Activated T-helper 2 cell treated with anti-CD3 and anti-CD28 coated beads, Interferon-gamma antibody, Interleukin-2, Interleukin-4, amounts not matched to agents 10 μg/mL and 5 μg/mL and 100 μg/mL, durations not matched to agents 14 hours and 24 hours and 36 hours (primary cell): ENCODE measurements at regions of chr3 and their contacts with region 1.

Region 1: GRCh38 chr3:45188719-45189659 is 37.1 kb downstream of the TMEM158 start:
- DNase-seq: no peak
- H3K4me3 Mint-ChIP-seq: no peak overlapping the region
- H3K27ac Mint-ChIP-seq: no peak overlapping the region
- H3K4me1 Mint-ChIP-seq: peaks cover 46% of the 10 kb centered on the region
- H3K27me3 Mint-ChIP-seq: peaks cover 2% of the 10 kb centered on the region

Region 2: GRCh38 chr3:44942202-44942921 is 246.6 kb before region 1 on chr3:
- intact Hi-C with region 1: no loop called
- DNase-seq: no peak
- H3K4me3 Mint-ChIP-seq: no peak overlapping the region
- H3K27ac Mint-ChIP-seq: no peak overlapping the region
- H3K4me1 Mint-ChIP-seq: peaks cover 3% of the 10 kb centered on the region
- H3K27me3 Mint-ChIP-seq: no peaks in the 10 kb centered on the region

Region 3: GRCh38 chr3:45064512-45065372 is 124.2 kb before region 1 on chr3:
- intact Hi-C with region 1: loop called (anchors 5 kb)
- DNase-seq: peak; percentile 69
- H3K4me3 Mint-ChIP-seq: peak overlapping the region; percentile 69
- H3K27ac Mint-ChIP-seq: peak overlapping the region; percentile 96
- H3K4me1 Mint-ChIP-seq: peaks cover 50% of the 10 kb centered on the region
- H3K27me3 Mint-ChIP-seq: peaks cover 3% of the 10 kb centered on the region

Region 4: DNA sequence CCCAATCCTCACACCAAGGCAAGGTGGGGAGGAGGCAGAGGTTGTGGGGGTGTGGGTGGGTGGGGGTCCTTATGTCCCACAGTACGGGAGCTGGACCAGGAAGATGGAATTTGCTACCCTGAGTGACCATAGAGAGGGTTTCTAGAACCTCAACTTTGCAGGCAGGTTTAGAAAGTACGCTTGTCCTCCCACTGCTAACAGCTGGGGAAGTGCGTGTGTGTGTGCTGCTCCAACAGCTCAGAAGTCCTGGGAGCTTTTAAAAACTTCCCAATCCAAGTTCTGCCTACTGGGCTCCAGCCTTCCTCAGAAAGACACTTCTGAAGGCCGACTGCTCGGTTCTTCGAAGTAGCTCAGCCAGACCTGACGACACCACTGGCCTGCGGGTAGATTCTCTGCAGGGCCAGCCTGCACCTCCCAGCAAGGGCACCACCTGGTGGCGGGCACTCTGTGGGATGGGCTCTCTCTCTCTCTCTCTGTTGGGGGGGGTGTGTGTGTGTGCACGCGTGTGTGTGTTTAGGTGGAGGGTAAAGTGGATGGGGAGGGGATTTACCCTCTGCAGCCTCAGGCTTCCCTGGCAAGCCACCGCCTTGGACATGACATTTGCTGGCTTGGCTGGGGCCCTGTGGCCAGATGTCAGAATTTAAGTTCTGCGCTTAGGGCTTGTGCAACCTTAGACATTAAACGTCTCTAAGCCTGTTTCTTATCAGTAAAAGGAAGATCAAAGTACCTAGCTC is 21.5 kb after region 1 on chr3:
- intact Hi-C with region 1: loop called (anchors 1 kb)
- DNase-seq: peak; percentile 69
- H3K4me3 Mint-ChIP-seq: no peak overlapping the region
- H3K27ac Mint-ChIP-seq: no peak overlapping the region
- H3K4me1 Mint-ChIP-seq: peaks cover 31% of the 10 kb centered on the region
- H3K27me3 Mint-ChIP-seq: peaks cover 11% of the 10 kb centered on the region

Region 5: DNA sequence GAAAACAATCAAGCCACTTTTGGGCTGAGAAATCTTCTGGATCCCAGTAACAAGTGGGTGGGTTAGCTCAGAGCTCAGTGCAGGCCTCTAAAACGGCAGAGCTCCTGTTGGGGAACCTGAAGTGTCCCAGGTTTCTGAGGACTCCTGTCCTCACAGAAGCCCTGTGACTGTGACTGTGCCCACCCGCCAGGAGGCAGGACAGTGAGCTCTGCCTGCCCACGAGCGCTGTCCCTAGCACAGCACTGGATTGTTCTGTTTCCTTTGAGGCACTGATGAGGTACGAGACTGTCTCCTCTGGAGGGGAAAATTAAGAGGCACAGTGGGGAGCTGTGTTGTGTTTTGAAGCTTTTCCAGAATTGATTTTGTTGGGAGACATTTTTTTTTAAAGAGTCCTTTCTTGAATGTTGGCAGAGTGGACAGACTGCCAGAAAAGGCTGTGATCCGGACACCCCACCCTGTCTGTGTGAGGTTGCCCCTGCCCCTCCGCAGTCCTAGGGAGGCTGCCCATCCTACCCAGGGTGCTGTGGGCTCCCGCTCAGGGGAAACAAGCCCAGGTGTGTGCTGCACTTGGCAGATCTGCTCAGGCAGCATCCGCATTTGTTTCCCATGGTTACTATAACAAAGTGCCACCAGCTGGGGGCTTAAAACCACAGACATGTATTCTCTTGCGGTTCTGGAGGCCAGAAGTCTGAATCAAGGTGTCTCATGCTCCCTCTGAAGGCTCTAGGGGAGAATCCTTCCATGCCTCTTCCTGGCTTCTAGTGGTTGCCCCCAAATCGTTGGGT is 132.8 kb after region 1 on chr3:
- intact Hi-C with region 1: no loop called
- DNase-seq: no peak
- H3K4me3 Mint-ChIP-seq: no peak overlapping the region
- H3K27ac Mint-ChIP-seq: no peak overlapping the region
- H3K4me1 Mint-ChIP-seq: no peaks in the 10 kb centered on the region
- H3K27me3 Mint-ChIP-seq: peaks cover 25% of the 10 kb centered on the region